Adrenal gland (tissue), 19 donors: ENCODE measurements at regions of chr18 and their contacts with region 1.

Region 1: DNA sequence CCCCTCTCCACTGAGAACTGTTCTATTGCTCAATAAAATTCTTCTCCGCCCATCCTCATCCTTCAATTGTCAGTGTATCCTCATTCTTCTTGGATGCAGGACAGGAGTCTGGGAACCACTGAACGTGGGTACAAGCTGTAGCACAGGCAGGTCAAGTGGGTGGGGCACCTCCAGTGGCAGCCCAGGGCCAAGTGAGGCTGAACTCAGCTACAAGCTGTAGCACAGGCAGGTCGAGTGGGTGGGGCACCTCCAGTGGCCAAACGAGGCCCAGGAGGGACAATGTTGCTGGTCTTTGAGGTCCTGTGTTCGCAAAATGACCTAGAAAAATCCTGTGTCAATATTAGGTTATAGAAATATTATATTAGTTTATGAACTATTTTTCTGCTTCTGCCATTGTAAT is 352.0 kb downstream of the TMX3 start:
- DNase-seq: no peak
- H3K4me3 ChIP-seq: no peak overlapping the region
- H3K27ac ChIP-seq: no peak overlapping the region
- H3K4me1 ChIP-seq: no peaks in the 10 kb centered on the region
- H3K27me3 ChIP-seq: no peaks in the 10 kb centered on the region
- CTCF ChIP-seq: no peak
- POLR2A ChIP-seq: no peak

Region 2: DNA sequence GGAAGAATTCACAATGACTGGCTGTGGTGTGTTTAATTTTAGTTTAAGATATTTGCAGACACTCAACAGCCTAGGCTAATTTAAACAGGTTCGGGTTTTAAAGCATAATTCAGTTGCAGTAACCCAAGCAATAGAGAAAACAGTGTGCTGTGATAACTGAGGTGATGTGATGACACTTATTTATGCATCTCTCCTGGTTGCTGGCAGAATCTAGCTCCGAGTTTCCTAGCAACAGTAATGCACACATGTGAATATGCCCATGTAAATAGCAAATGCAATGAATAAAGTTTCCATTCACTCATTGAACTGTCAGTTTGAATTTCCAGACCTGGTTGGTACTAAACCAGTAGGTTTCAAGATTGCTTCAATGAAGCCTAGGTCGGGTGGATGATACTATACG is 74.5 kb before region 1 on chr18:
- intact Hi-C with region 1: no loop called
- DNase-seq: no peak
- H3K4me3 ChIP-seq: no peak overlapping the region
- H3K27ac ChIP-seq: no peak overlapping the region
- H3K4me1 ChIP-seq: no peaks in the 10 kb centered on the region
- H3K27me3 ChIP-seq: no peaks in the 10 kb centered on the region
- CTCF ChIP-seq: no peak
- POLR2A ChIP-seq: no peak

Region 3: GRCh38 chr18:68427951-68428401 is 65.1 kb after region 1 on chr18:
- intact Hi-C with region 1: loop called in 1 of 2 experiments (anchors 10 kb)
- DNase-seq: no peak
- H3K4me3 ChIP-seq: no peak overlapping the region
- H3K27ac ChIP-seq: no peak overlapping the region
- H3K4me1 ChIP-seq: no peaks in the 10 kb centered on the region
- H3K27me3 ChIP-seq: no peaks in the 10 kb centered on the region
- CTCF ChIP-seq: no peak
- POLR2A ChIP-seq: no peak